Panc1 (cell line): ENCODE measurements at regions of chr2 and their contacts with region 1.

Region 1: GRCh38 chr2:72150157-72150865 is 2.6 kb upstream of the CYP26B1 start:
- DNase-seq: peak; percentile 65
- ATAC-seq: peak; percentile 87
- H3K4me3 ChIP-seq: peak overlapping the region; percentile 40 to 64
- H3K27ac ChIP-seq: no peak overlapping the region
- H3K4me1 ChIP-seq: peaks cover 22% of the 10 kb centered on the region
- H3K27me3 ChIP-seq: peaks cover 11% of the 10 kb centered on the region
- CTCF ChIP-seq: peak; percentile 89

Region 2: DNA sequence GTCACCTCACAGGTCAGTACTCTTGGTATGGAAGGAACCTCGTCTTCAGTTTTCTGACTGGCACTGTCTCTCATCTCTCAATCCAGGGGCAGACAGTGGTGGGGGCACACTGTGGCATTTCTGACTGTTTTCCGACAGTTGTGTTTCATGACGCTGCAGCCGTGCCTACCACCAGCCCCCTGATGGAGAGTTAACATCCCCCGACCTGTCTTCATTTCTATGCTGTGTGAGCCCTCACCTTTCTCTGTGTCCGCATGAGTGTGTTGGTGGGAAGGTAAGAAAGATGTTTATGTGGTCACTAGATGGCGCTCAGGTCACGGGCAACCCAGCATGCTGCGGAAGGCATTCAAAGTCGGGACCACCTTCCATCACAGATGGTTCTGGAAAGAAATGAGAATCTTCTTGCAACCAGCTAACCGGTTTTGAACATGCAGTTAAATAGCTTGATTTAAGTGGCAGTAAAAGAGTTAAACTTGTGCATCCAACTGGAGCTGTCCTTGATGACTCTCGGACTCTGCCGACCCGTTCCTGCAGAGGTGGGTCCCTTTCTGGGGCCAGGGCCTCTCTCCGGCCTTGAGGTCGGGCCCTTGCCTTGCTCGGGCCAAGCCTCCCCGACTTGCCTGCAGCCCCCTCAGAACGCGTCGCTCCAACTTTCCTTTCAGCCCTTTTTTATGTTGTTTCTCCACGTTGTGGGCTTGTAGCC is 604.6 kb before region 1 on chr2:
- CTCF ChIA-PET with region 1: interaction called, 4 read pairs
- POLR2A ChIA-PET with region 1: interaction called, 9 read pairs
- in situ Hi-C with region 1: no loop called
- intact Hi-C with region 1: loop called (anchors 5 kb)
- DNase-seq: peak; percentile 30
- ATAC-seq: peak; percentile 86
- H3K4me3 ChIP-seq: peak overlapping the region; percentile 1 to 25; a peak in 3 of 4 replicates
- H3K27ac ChIP-seq: no peak overlapping the region
- H3K4me1 ChIP-seq: no peaks in the 10 kb centered on the region; the same call in 1 of the 2 replicates
- H3K27me3 ChIP-seq: no peaks in the 10 kb centered on the region; the same call in 1 of the 2 replicates
- CTCF ChIP-seq: peak; percentile 90

Region 3: DNA sequence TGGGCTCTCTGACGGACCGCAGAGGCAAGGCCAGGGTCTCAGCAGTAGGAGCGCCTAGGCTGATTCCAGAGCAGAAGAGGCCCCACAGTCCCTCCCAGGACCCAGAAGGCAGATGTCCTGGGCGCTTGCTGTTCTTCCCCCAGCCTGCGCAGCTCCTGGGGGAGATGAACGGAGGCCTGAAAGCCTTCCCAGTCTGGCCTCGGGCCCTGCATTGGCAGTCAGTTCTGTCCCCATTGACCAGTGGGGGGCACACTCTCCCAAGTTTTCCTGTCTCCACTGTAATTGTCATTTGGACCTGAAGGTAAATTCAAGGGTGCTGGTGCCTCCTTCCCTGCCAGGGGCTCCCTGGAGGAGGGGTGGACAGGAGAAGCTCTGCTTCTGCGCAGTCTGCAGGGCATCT is 348.3 kb before region 1 on chr2:
- CTCF ChIA-PET with region 1: interaction called, 4 read pairs
- POLR2A ChIA-PET with region 1: no interaction called
- in situ Hi-C with region 1: no loop called
- intact Hi-C with region 1: loop called (anchors 10 kb)
- DNase-seq: no peak
- ATAC-seq: peak; percentile 62
- H3K4me3 ChIP-seq: no peak overlapping the region
- H3K27ac ChIP-seq: no peak overlapping the region
- H3K4me1 ChIP-seq: no peaks in the 10 kb centered on the region
- H3K27me3 ChIP-seq: no peaks in the 10 kb centered on the region
- CTCF ChIP-seq: peak; percentile 60

Region 4: DNA sequence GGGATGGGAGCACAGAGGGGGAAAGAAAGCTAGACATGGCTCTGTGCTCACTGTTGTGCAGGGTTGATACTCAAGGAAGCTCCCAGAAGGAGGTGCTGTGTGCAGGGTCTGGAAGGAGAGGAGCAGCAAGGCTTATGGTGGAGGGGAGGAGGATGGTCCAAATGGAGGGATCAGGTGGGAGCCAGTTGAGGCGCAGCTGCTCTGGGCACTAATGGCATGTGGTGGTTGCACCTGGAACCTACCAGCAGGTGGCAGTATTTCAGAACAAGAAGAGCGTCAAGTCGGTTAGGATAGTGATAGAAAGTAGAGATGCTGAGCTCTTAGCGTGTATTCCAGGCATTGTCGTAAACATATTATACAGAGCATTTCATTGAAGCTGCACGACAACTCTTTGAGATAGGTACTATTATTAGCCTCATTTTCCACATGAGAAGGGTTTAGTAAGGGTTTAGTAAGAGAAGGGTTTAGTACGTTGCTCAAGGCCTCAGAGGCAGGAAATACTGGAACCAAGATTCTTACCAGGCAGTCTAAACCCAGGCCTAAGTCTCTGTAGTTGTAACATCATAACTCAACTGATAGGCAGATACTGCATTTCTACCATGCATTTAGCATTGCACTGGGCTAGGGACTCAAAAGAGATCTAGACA is 226.3 kb before region 1 on chr2:
- CTCF ChIA-PET with region 1: interaction called, 17 read pairs
- POLR2A ChIA-PET with region 1: no interaction called
- in situ Hi-C with region 1: no loop called
- intact Hi-C with region 1: loop called (anchors 1 kb)
- DNase-seq: peak; percentile 61
- ATAC-seq: peak; percentile 90
- H3K4me3 ChIP-seq: no peak overlapping the region
- H3K27ac ChIP-seq: no peak overlapping the region
- H3K4me1 ChIP-seq: no peaks in the 10 kb centered on the region
- H3K27me3 ChIP-seq: no peaks in the 10 kb centered on the region
- CTCF ChIP-seq: peak; percentile 87

Region 5: DNA sequence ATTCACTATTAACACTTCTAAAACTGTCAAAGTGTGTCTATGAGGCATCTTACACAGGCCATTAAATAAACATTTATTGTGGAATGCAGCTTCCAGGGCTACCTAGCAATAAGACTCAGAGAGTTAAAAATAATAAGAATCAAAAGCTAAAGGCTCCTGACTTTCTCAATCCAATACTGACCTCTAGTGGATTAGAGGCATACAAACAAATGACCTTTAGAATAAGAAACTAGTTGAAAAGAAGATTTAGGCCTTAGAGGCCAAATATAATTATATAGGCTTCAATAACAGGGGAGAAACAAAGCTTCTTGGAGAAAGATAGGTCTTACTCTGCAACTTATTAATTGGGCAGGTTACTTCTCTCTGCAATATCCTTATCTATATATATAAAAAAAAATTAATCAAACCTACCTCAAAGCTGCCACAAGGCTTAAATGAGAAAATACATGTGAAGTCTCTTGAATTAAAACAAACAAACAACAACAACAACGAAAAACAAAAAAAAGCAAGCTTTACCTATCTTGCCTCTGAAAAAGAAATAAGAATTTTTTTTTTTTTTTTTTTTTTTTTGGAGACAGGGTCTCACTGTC is 429.4 kb after region 1 on chr2:
- CTCF ChIA-PET with region 1: interaction called, 11 read pairs
- POLR2A ChIA-PET with region 1: no interaction called
- in situ Hi-C with region 1: no loop called
- intact Hi-C with region 1: loop called (anchors 5 kb)
- DNase-seq: no peak
- ATAC-seq: no peak
- H3K4me3 ChIP-seq: no peak overlapping the region
- H3K27ac ChIP-seq: no peak overlapping the region
- H3K4me1 ChIP-seq: no peaks in the 10 kb centered on the region
- H3K27me3 ChIP-seq: no peaks in the 10 kb centered on the region
- CTCF ChIP-seq: peak; percentile 62; the same call in 1 of the 2 replicates

Region 6: DNA sequence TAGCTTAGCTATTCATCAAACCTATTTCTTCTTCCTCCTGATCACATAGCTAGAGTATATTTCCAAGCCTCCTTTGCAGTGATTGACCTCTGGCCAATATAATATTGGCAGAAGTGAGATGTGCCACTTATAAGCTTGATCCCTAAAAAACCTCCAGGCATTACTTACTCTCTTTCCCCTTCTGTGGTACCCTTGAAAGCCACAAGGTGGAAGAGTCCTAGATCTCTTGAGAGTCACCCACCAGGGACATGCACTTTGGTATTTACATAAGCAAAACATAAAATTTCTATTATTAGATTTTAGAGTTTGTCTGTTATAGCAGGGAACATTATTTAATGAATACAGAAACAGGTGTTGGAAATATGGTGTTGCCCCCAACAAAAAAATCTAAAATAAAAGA is 563.5 kb after region 1 on chr2:
- CTCF ChIA-PET with region 1: no interaction called
- POLR2A ChIA-PET with region 1: no interaction called
- in situ Hi-C with region 1: no loop called
- intact Hi-C with region 1: no loop called
- DNase-seq: no peak
- ATAC-seq: no peak
- H3K4me3 ChIP-seq: no peak overlapping the region
- H3K27ac ChIP-seq: no peak overlapping the region
- H3K4me1 ChIP-seq: no peaks in the 10 kb centered on the region
- H3K27me3 ChIP-seq: no peaks in the 10 kb centered on the region
- CTCF ChIP-seq: no peak

Region 7: GRCh38 chr2:72745679-72746368 is 595.5 kb after region 1 on chr2:
- CTCF ChIA-PET with region 1: no interaction called
- POLR2A ChIA-PET with region 1: no interaction called
- in situ Hi-C with region 1: no loop called
- intact Hi-C with region 1: loop called (anchors 10 kb)
- DNase-seq: peak; percentile 55
- ATAC-seq: no peak
- H3K4me3 ChIP-seq: no peak overlapping the region
- H3K27ac ChIP-seq: peak overlapping the region; percentile 48; the same call in 1 of the 2 replicates
- H3K4me1 ChIP-seq: no peaks in the 10 kb centered on the region; the same call in 1 of the 2 replicates
- H3K27me3 ChIP-seq: no peaks in the 10 kb centered on the region
- CTCF ChIP-seq: peak; percentile 74; the same call in 1 of the 2 replicates